Activated naive CD4-positive, alpha-beta T cell treated with anti-CD3 and anti-CD28 coated beads for 36 hours (primary cell): ENCODE measurements at regions of chr11 and their contacts with region 1.

Region 1: DNA sequence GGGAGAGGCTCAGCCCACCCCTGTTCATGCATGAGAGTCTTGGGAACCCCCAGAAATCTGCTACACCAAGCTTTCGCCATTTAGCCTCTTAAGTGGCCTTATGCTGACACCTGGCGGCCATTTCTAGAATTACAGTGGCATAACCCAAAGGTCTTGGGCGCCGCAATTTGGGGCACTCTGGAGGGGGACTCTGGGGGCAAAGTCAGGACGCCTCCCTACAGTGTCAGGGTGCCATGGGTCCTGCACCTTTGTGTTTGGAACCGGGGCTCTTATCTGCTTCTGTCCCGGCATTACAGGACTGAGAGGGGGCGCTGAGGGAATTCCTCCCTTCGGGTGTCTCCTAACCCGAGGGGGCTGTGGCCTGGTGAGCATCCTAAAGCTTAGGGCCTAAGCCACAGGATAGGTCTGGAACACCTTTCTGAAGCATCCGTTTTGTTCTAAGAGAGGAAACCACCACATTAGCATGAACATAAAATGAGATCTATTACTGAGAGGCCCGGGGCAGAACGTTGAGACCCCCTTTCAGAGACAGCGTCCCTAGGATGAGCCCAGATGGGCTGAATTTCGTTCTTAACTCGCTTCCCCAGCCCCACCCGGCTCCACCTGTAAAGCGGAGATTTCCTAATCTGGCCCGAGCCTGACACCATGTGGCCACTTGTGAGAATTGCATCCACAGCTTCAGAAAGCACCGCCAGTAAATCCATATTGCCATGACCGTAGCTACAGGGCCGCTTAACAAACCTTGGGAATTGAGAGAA is 9.3 kb downstream of the INS start:
- DNase-seq: peak; percentile 88
- H3K4me3 Mint-ChIP-seq: no peak overlapping the region
- H3K27ac Mint-ChIP-seq: no peak overlapping the region
- H3K4me1 Mint-ChIP-seq: peaks cover 5% of the 10 kb centered on the region
- H3K27me3 Mint-ChIP-seq: peaks cover 33% of the 10 kb centered on the region

Region 2: GRCh38 chr11:1832211-1832919 is 319.3 kb before region 1 on chr11:
- CTCF ChIA-PET with region 1: interaction called, 24 read pairs
- intact Hi-C with region 1: loop called (anchors 1 kb)
- DNase-seq: peak; percentile 64
- H3K4me3 Mint-ChIP-seq: no peak overlapping the region
- H3K27ac Mint-ChIP-seq: no peak overlapping the region
- H3K4me1 Mint-ChIP-seq: no peaks in the 10 kb centered on the region
- H3K27me3 Mint-ChIP-seq: peaks cover 2% of the 10 kb centered on the region

Region 3: GRCh38 chr11:1882519-1883238 is 269.0 kb before region 1 on chr11:
- CTCF ChIA-PET with region 1: interaction called, 23 read pairs
- intact Hi-C with region 1: loop called (anchors 1 kb)
- DNase-seq: peak; percentile 85
- H3K4me3 Mint-ChIP-seq: no peak overlapping the region
- H3K27ac Mint-ChIP-seq: no peak overlapping the region
- H3K4me1 Mint-ChIP-seq: peaks cover 3% of the 10 kb centered on the region
- H3K27me3 Mint-ChIP-seq: no peaks in the 10 kb centered on the region

Region 4: GRCh38 chr11:2027708-2028107 is 124.0 kb before region 1 on chr11:
- CTCF ChIA-PET with region 1: interaction called, 370 read pairs
- intact Hi-C with region 1: no loop called
- DNase-seq: no peak
- H3K4me3 Mint-ChIP-seq: no peak overlapping the region
- H3K27ac Mint-ChIP-seq: no peak overlapping the region
- H3K4me1 Mint-ChIP-seq: no peaks in the 10 kb centered on the region
- H3K27me3 Mint-ChIP-seq: no peaks in the 10 kb centered on the region